Natural killer cell (primary cell): ENCODE measurements at regions of chr17 and their contacts with region 1.

Region 1: GRCh38 chr17:1455797-1456599 is at the start of gene CRK:
- DNase-seq: peak; percentile 99
- ATAC-seq: peak; percentile 92 to 99 (median 93)
- H3K4me3 ChIP-seq: peak within 1 kb of the TSS; percentile 90
- H3K4me3 Mint-ChIP-seq: peak within 1 kb of the TSS; percentile 89
- H3K27ac ChIP-seq: peak within 1 kb of the TSS; percentile 96
- H3K27ac Mint-ChIP-seq: peak within 1 kb of the TSS; percentile 77 to 81
- H3K4me1 ChIP-seq: peaks cover 28% of the 10 kb centered on the region
- H3K4me1 Mint-ChIP-seq: peaks cover 22 to 34% of the 10 kb centered on the region in 2 donors
- H3K27me3 ChIP-seq: peaks cover 17% of the 10 kb centered on the region
- H3K27me3 Mint-ChIP-seq: peaks cover 10 to 17% of the 10 kb centered on the region in 2 donors
- CTCF ChIP-seq: no peak
- total RNA-seq, gene CRK: 15.9 to 19.6 (median 16.7) TPM

Region 2: DNA sequence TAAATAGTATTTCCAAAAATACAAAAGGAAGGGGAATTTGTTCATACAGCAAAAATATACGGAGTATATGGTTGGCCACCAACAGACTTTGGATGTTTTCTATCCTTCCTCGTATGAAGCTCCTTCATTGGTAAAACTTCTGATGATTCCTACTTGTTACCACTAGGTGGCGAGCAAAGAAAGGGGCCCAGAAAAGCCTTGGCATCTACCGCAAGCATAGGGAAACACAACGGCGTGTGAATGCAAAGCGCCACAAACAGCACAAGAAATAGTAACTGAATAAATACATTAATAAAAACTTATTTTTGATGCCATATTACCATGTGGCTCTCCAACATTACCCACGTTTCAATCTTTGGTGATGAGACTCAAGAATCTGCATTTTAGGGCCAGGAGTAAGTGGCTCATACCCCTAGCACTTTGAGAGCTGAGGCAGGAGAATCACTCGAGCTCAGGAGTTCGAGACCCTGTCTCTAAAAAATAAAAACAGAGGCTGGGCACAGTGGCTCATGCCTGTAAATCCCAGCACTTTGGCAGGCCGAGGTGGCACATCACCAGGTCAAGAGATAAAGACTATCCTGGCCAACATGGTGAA is 90.5 kb before region 1 on chr17:
- intact Hi-C with region 1: loop called (anchors 1 kb)
- DNase-seq: peak; percentile 44 to 88
- ATAC-seq: peak; percentile 80 to 90 (median 84)
- H3K4me3 ChIP-seq: no peak overlapping the region
- H3K4me3 Mint-ChIP-seq: peak overlapping the region; percentile 9
- H3K27ac ChIP-seq: peak overlapping the region; percentile 45
- H3K27ac Mint-ChIP-seq: peak overlapping the region; percentile 60 to 72
- H3K4me1 ChIP-seq: peaks cover 38% of the 10 kb centered on the region
- H3K4me1 Mint-ChIP-seq: peaks cover 48 to 58% of the 10 kb centered on the region in 2 donors
- H3K27me3 ChIP-seq: no peaks in the 10 kb centered on the region
- H3K27me3 Mint-ChIP-seq: no peaks in the 10 kb centered on the region
- CTCF ChIP-seq: peak; percentile 80

Region 3: DNA sequence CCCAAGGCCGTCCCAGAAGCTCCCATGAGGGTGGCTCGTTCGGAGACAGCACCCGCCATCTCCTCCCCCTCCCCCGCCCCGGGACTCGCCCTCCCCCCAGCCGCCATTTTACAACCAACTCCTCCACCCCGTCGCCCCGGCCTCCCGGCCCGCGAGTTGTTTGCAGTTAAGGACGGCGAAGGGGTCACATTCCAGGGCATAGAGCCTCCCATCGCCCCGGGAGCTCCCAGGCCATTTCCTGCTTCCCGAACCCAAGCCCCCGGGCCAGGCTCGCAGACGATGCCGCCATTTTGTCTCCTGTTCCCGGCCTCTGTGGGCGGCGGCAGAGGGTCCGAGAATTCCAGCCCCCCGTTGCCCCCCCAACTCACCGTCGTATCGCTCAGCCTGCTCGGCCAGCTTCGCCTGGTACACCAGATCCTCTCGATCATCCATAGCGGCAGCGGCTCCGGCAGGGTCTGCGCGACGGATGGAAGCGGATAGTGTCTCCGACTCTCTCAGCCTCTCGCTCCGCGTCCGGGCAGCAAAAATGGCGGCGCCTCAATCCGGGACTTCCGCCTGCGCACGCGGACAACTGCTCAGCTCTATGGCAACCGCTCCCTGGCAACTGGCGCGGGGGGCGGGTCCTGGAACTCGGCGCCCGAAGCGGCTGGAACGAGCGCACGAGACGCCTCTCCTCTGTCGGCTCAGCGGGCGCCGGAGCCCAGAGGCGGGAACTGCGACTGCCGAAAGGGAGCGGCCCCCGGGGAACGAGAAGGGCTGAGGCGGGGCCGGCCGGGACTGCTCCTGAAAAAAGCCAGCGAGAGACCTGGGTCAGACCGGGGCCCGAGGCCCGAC is 56.1 kb before region 1 on chr17 and contains the start of gene YWHAE:
- intact Hi-C with region 1: loop called (anchors 2 kb)
- DNase-seq: peak; percentile 93 to 96
- ATAC-seq: peak; percentile 86 to 95 (median 91)
- H3K4me3 ChIP-seq: peak within 1 kb of the TSS; percentile 92
- H3K4me3 Mint-ChIP-seq: peak within 1 kb of the TSS; percentile 99
- H3K27ac ChIP-seq: peak within 1 kb of the TSS; percentile 89
- H3K27ac Mint-ChIP-seq: peak within 1 kb of the TSS; percentile 98
- H3K4me1 ChIP-seq: peaks cover 15% of the 10 kb centered on the region
- H3K4me1 Mint-ChIP-seq: peaks cover 33 to 44% of the 10 kb centered on the region in 2 donors
- H3K27me3 ChIP-seq: no peaks in the 10 kb centered on the region
- H3K27me3 Mint-ChIP-seq: no peaks in the 10 kb centered on the region
- CTCF ChIP-seq: no peak
- total RNA-seq, gene YWHAE: 116 to 134 (median 132) TPM

Region 4: DNA sequence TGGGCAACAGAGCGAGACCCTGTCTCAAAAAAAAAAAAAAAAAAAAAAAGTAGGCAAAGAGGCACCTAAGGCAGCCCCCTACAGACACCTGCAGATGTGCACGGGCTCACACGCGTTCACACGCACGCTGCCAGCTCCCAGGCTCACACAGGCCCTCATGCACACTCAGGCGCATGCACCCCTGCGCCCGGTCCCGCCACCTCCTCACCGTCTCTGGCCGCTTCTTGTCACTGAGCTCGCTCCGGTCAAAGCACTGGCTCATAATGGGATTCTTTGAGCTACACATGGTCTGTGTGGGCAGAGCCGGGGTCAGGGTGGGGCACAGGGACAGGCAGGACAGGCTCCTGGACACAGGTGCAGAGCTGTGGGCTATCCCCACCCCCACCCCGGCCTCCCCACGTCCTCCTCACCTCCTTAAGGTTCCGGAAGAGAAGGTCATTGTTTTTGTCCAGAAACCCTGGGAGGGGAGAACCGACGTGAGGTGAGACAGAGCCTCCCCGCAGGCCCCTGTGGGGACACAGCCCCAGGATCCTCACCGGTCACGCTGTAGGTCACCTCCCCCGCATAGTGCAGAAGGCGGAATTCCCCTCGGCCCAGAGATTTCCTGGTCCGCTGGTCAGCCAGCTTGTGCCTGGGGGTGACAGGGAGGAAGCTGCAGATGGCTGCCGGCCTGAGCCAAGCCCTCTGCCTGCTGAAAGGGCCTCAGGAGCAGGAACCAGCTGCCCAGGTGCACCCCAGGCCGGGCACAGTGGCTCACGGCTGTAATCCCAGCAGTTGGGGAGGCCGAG is 18.6 kb after region 1 on chr17:
- intact Hi-C with region 1: no loop called
- DNase-seq: no peak
- ATAC-seq: no peak
- H3K4me3 ChIP-seq: no peak overlapping the region
- H3K4me3 Mint-ChIP-seq: no peak overlapping the region
- H3K27ac ChIP-seq: no peak overlapping the region
- H3K27ac Mint-ChIP-seq: no peak overlapping the region
- H3K4me1 ChIP-seq: peaks cover 10% of the 10 kb centered on the region
- H3K4me1 Mint-ChIP-seq: no peaks in the 10 kb centered on the region
- H3K27me3 ChIP-seq: no peaks in the 10 kb centered on the region
- H3K27me3 Mint-ChIP-seq: peaks cover 15 to 19% of the 10 kb centered on the region in 2 donors
- CTCF ChIP-seq: no peak

Region 5: GRCh38 chr17:1490643-1491442 is 34.8 kb after region 1 on chr17:
- intact Hi-C with region 1: loop called (anchors 5 kb)
- DNase-seq: peak; percentile 48 to 74
- ATAC-seq: peak; percentile 48 to 76 (median 59)
- H3K4me3 ChIP-seq: peak overlapping the region; percentile 48
- H3K4me3 Mint-ChIP-seq: peak overlapping the region; percentile 74
- H3K27ac ChIP-seq: peak overlapping the region; percentile 21
- H3K27ac Mint-ChIP-seq: no peak overlapping the region
- H3K4me1 ChIP-seq: peaks cover 58% of the 10 kb centered on the region
- H3K4me1 Mint-ChIP-seq: peaks cover 6 to 41% of the 10 kb centered on the region in 2 donors
- H3K27me3 ChIP-seq: peaks cover 15% of the 10 kb centered on the region
- H3K27me3 Mint-ChIP-seq: no peaks in the 10 kb centered on the region
- CTCF ChIP-seq: no peak

Region 6: DNA sequence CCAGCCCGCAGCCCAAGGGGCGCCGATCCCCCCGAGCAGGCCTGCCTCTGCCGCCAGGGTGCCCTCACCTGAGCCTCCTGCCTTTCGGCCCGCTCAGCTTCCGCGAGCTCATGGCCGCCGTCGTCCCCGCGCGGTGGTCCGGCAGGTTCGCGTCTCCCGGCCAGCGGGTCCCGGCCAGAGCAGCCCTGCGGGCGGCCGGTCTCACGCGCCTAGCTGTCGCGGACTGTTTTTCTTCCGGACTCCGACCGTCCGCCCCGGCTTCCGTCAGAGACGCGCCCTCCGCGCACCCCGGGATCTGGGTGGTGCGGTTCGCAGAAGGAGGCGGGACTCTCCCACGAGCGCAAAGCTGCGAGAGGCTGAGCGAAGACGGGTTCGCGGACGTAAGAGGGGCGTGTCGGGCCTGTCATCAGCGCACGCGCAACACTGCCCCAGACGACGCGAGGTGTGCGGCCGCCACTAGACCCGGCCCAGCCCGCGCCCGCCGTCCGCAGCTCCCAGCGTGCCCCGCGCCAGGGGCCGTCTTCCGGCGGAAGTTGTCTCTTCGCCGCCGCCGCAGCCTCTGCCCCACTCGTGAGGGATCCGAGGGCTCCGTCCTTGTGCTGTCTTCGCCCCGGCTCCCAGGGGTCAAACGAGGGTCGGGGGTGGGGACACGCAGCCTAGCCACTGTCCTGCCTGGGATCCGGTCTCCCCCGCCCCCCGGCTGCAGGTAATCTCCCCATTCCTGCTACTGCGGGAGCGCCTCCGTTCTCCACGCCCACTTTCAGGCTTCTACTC is 60.6 kb after region 1 on chr17 and contains the start of gene INPP5K:
- intact Hi-C with region 1: loop called (anchors 1 kb)
- DNase-seq: peak; percentile 97 to 100
- ATAC-seq: peak; percentile 89 to 98 (median 89)
- H3K4me3 ChIP-seq: peak within 1 kb of the TSS; percentile 96
- H3K4me3 Mint-ChIP-seq: peak within 1 kb of the TSS; percentile 95
- H3K27ac ChIP-seq: peak within 1 kb of the TSS; percentile 78
- H3K27ac Mint-ChIP-seq: peak within 1 kb of the TSS; percentile 89 to 94
- H3K4me1 ChIP-seq: peaks cover 25% of the 10 kb centered on the region
- H3K4me1 Mint-ChIP-seq: peaks cover 11 to 23% of the 10 kb centered on the region in 2 donors
- H3K27me3 ChIP-seq: no peaks in the 10 kb centered on the region
- H3K27me3 Mint-ChIP-seq: no peaks in the 10 kb centered on the region
- CTCF ChIP-seq: no peak
- total RNA-seq, gene INPP5K: 278 to 317 (median 292) TPM

Region 7: GRCh38 chr17:2025622-2026310 is 569.8 kb after region 1 on chr17:
- intact Hi-C with region 1: no loop called
- DNase-seq: peak in 1 of 2 donors; percentile 53
- ATAC-seq: no peak
- H3K4me3 ChIP-seq: no peak overlapping the region
- H3K4me3 Mint-ChIP-seq: peak overlapping the region; percentile 80
- H3K27ac ChIP-seq: no peak overlapping the region
- H3K27ac Mint-ChIP-seq: peak overlapping the region in 1 of 2 donors; percentile 22
- H3K4me1 ChIP-seq: peaks cover 38% of the 10 kb centered on the region
- H3K4me1 Mint-ChIP-seq: peaks cover 16 to 30% of the 10 kb centered on the region in 2 donors
- H3K27me3 ChIP-seq: peaks cover 20% of the 10 kb centered on the region
- H3K27me3 Mint-ChIP-seq: peaks cover 36 to 39% of the 10 kb centered on the region in 2 donors
- CTCF ChIP-seq: no peak